ENCODE measurements at regions of chr22 and their contacts with region 1.

Region 1: GRCh38 chr22:22195265-22196017 is 49.1 kb upstream of the VPREB1 start:
- DNase-seq: peak; percentile 67 to 88 (median 78)
- ATAC-seq: peak; percentile 84
- H3K4me3 ChIP-seq: no peak overlapping the region
- H3K4me3 Mint-ChIP-seq: no peak overlapping the region
- H3K27ac ChIP-seq: no peak overlapping the region
- H3K27ac Mint-ChIP-seq: no peak overlapping the region
- H3K4me1 ChIP-seq: no peaks in the 10 kb centered on the region
- H3K4me1 Mint-ChIP-seq: no peaks in the 10 kb centered on the region
- H3K27me3 ChIP-seq: peaks cover 2 to 5% of the 10 kb centered on the region in 2 experiments
- H3K27me3 Mint-ChIP-seq: peaks cover 37% of the 10 kb centered on the region
- CTCF ChIP-seq: peak; percentile 89

Region 2: DNA sequence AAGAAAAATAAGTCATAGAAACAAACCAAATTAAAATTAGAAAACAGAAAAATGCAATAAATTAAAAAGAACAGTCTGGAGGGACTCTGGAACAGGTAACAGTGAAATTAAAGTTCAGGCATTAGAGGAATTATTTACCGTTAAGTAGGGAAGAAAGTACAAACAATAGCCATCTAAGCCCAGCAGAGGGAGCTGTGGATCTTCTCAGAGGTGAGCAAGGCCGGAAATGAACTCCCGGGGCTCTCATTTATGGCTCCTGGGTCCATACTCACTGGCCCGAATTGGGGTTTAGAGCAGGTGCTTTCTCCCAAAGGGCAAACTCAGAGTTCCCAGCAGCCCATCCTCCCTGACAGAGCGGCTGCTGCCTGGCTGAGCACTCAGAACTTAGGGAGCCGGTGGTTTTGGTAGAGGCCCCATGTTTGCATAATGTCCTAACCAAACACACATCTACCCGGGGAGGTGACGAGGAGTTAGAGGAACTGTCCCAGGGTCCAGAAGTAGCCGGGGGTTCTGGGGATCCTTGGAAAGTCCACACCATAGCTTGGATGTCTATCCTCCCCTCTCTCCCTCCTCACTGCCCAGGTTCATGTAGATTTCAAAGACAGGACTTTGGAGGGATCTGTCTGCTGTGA is 38.6 kb before region 1 on chr22:
- CTCF ChIA-PET with region 1: interaction called, 3 read pairs
- POLR2A ChIA-PET with region 1: no interaction called
- intact Hi-C with region 1: loop called in 1 of 2 experiments (anchors 2 kb)
- DNase-seq: peak; percentile 13 to 84 (median 48)
- ATAC-seq: peak; percentile 81
- H3K4me3 ChIP-seq: no peak overlapping the region
- H3K4me3 Mint-ChIP-seq: no peak overlapping the region
- H3K27ac ChIP-seq: no peak overlapping the region
- H3K27ac Mint-ChIP-seq: no peak overlapping the region
- H3K4me1 ChIP-seq: peaks cover 7% of the 10 kb centered on the region
- H3K4me1 Mint-ChIP-seq: peaks cover 6% of the 10 kb centered on the region
- H3K27me3 ChIP-seq: peaks cover 0 to 3% of the 10 kb centered on the region in 2 experiments
- H3K27me3 Mint-ChIP-seq: peaks cover 12% of the 10 kb centered on the region
- CTCF ChIP-seq: peak; percentile 68

Measured in CD4-positive, alpha-beta T cell (primary cell).